Mammary epithelial cell (primary cell): ENCODE measurements at regions of chrX and their contacts with region 1.

Region 1: GRCh38 chrX:283115-283845 is 2.1 kb downstream of the PLCXD1 start:
- DNase-seq: peak; percentile 73
- H3K4me3 ChIP-seq: peak overlapping the region; percentile 50 to 71 (median 56)
- H3K27ac ChIP-seq: peak overlapping the region; percentile 69
- H3K4me1 ChIP-seq: no peaks in the 10 kb centered on the region
- H3K27me3 ChIP-seq: no peaks in the 10 kb centered on the region
- CTCF ChIP-seq: no peak

Region 2: GRCh38 chrX:318739-319578 is 35.7 kb after region 1 on chrX and contains the start of gene GTPBP6:
- CTCF ChIA-PET with region 1: no interaction called
- dilution Hi-C with region 1: no loop called
- in situ Hi-C with region 1: no loop called
- intact Hi-C with region 1: loop called (anchors 5 kb)
- DNase-seq: peak; percentile 100
- H3K4me3 ChIP-seq: peak within 1 kb of the TSS; percentile 87 to 99 (median 97)
- H3K27ac ChIP-seq: peak within 1 kb of the TSS; percentile 82
- H3K4me1 ChIP-seq: peaks cover 10% of the 10 kb centered on the region
- H3K27me3 ChIP-seq: peaks cover 2% of the 10 kb centered on the region
- CTCF ChIP-seq: peak in 1 of 2 donors; percentile 28
- total RNA-seq, gene GTPBP6: 28.0 to 46.7 TPM

Region 3: GRCh38 chrX:373637-374471 is 90.6 kb after region 1 on chrX:
- CTCF ChIA-PET with region 1: no interaction called
- dilution Hi-C with region 1: no loop called
- in situ Hi-C with region 1: no loop called
- intact Hi-C with region 1: no loop called
- DNase-seq: peak; percentile 49
- H3K4me3 ChIP-seq: peak overlapping the region in 2 of 3 experiments; percentile 39
- H3K27ac ChIP-seq: no peak overlapping the region
- H3K4me1 ChIP-seq: peaks cover 11% of the 10 kb centered on the region
- H3K27me3 ChIP-seq: no peaks in the 10 kb centered on the region
- CTCF ChIP-seq: no peak